H1 (cell line): ENCODE measurements at regions of chr22 and their contacts with region 1.

Region 1: DNA sequence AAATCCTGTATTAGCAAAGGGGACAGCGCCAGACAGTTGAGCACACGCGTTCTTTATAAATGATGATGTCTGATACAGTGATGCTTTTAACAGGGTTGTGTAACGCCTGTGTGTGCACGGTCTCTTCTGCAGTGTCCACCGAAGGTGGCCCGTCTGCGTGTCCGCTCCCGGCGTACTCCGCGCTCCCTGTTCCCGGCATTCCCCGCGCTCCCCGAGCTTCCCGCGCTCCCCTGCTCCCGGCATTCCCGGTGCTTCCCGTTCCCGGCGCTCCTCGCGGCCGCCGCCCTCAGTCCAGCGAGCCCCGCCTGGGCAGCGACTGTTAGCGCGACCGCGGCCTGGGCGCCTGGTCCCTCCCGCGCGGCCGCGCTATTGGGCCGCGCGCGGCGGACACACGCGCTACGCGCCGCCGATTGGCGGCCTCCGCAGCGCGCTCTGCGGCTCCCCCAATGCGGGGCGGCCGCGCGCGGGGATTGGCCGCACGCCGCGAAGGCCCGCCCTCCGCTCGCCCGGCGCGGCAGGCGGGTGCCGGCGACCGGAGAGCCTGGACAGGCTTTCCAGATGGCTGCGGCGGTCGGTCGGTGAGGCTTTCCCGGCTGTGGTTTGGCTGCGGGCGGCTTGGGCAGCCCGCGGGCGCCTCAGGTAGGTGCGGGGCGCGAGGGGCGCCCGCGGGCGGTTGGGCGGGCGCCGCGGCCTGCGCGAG is at the start of gene DGCR8:
- DNase-seq: peak; percentile 64 to 91
- H3K4me3 ChIP-seq: peak within 1 kb of the TSS; percentile 81 to 99 (median 92)
- H3K27ac ChIP-seq: peak within 1 kb of the TSS; percentile 79
- H3K4me1 ChIP-seq: peaks cover 3 to 19% (median 11%) of the 10 kb centered on the region in 4 experiments
- H3K27me3 ChIP-seq: no peaks in the 10 kb centered on the region
- CTCF ChIP-seq: 0 out of 4 replicates have a peak, but pooled peaks of 1 of the 3 experiments have one; percentile 3
- EP300 ChIP-seq: no peak; a peak in 1 of 3 replicates
- POLR2A ChIP-seq: peak; percentile 73 to 89
- RAD21 ChIP-seq: no peak
- total RNA-seq, gene DGCR8: 42.3 and 43.7 TPM in 2 replicates

Region 2: GRCh38 chr22:20093418-20094196 is 13.7 kb after region 1 on chr22:
- CTCF ChIA-PET with region 1: interaction called, 4 read pairs
- POLR2A ChIA-PET with region 1: interaction called, 16 read pairs
- DNase-seq: no peak
- H3K4me3 ChIP-seq: no peak overlapping the region
- H3K27ac ChIP-seq: no peak overlapping the region
- H3K4me1 ChIP-seq: no peaks in the 10 kb centered on the region
- H3K27me3 ChIP-seq: no peaks in the 10 kb centered on the region
- CTCF ChIP-seq: no peak
- EP300 ChIP-seq: no peak
- POLR2A ChIP-seq: no peak
- RAD21 ChIP-seq: no peak

Region 3: GRCh38 chr22:20102203-20102780 is 22.4 kb after region 1 on chr22:
- CTCF ChIA-PET with region 1: interaction called, 11 read pairs
- POLR2A ChIA-PET with region 1: interaction called, 598 read pairs
- DNase-seq: no peak
- H3K4me3 ChIP-seq: no peak overlapping the region
- H3K27ac ChIP-seq: no peak overlapping the region
- H3K4me1 ChIP-seq: peaks cover 0 to 6% (median 0%) of the 10 kb centered on the region in 4 experiments; a peak in 3 of 7 replicates
- H3K27me3 ChIP-seq: no peaks in the 10 kb centered on the region
- CTCF ChIP-seq: peak; percentile 30 to 45 (median 32)
- EP300 ChIP-seq: no peak
- POLR2A ChIP-seq: no peak
- RAD21 ChIP-seq: no peak

Region 4: GRCh38 chr22:20116951-20117645 is 37.2 kb after region 1 on chr22 and contains the start of gene TRMT2A:
- CTCF ChIA-PET with region 1: interaction called, 11 read pairs
- POLR2A ChIA-PET with region 1: interaction called, 598 read pairs
- DNase-seq: peak; percentile 92 to 98
- H3K4me3 ChIP-seq: peak within 1 kb of the TSS; percentile 89 to 99 (median 98)
- H3K27ac ChIP-seq: peak within 1 kb of the TSS; percentile 93
- H3K4me1 ChIP-seq: peaks cover 0 to 12% (median 5%) of the 10 kb centered on the region in 4 experiments; a peak in 5 of 7 replicates
- H3K27me3 ChIP-seq: no peaks in the 10 kb centered on the region
- CTCF ChIP-seq: peak; percentile 19 to 23 (median 23)
- EP300 ChIP-seq: peak in 1 of 2 experiments; percentile 3; a peak in 1 of 3 replicates
- POLR2A ChIP-seq: peak; percentile 22 to 44; a peak in 2 of 3 replicates
- RAD21 ChIP-seq: no peak
- total RNA-seq, gene TRMT2A: 44.9 and 47.9 TPM in 2 replicates

Region 5: DNA sequence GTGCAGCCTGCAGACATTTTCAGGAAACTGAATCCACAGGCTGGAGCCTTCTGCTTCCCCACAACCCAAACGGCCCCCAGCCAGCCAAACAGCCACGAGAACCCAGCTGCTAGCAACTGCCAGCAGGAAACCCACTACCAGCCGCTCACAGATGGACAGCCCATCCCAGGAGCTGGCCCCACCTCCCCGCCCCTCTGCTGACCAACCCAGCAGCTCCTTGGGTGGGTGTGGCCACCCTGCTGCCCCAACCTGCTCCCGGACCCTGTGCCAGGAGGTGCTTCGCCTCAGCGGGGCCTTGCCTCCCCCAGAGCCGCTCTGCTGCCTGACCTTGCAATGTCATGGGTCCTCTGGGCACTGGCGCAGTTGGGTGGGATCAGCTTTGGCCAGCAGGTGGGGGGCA is 79.2 kb after region 1 on chr22:
- CTCF ChIA-PET with region 1: no interaction called
- POLR2A ChIA-PET with region 1: no interaction called
- DNase-seq: peak in 1 of 2 experiments; percentile 76
- H3K4me3 ChIP-seq: no peak overlapping the region
- H3K27ac ChIP-seq: no peak overlapping the region
- H3K4me1 ChIP-seq: peaks cover 0 to 7% (median 4%) of the 10 kb centered on the region in 4 experiments; a peak in 4 of 7 replicates
- H3K27me3 ChIP-seq: no peaks in the 10 kb centered on the region
- CTCF ChIP-seq: no peak
- EP300 ChIP-seq: no peak
- POLR2A ChIP-seq: no peak
- RAD21 ChIP-seq: peak in 1 of 2 experiments; percentile 14; a peak in 1 of 4 replicates